ENCODE measurements at regions of chr11 and their contacts with region 1.

Region 1: DNA sequence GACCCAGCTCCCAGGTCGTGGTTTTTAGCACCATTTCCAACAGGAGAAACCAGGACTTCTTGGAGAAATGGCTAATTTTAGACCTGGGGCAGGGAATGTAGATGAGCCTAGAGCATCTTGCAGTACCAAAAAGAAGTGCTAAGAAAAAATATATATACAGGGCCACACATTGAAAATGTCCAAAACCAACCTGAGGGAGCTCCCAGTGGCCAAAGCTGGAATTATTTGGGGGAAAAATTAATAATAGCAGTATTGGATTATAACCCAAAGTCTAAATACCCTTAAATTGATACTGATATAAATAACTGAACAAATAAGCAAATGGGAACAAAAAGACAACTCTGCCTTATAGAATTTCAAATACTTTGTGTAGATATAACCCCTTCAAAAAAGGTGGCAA is 108.0 kb downstream of the PARVA start:
- DNase-seq: no peak
- H3K4me3 ChIP-seq: no peak overlapping the region
- H3K27ac ChIP-seq: no peak overlapping the region
- H3K4me1 ChIP-seq: no peaks in the 10 kb centered on the region
- H3K27me3 ChIP-seq: no peaks in the 10 kb centered on the region
- CTCF ChIP-seq: peak in 2 of 3 experiments; percentile 28 to 30; a peak in 2 of 4 replicates
- EP300 ChIP-seq: no peak
- POLR2A ChIP-seq: no peak
- RAD21 ChIP-seq: peak; percentile 43 to 55

Region 2: GRCh38 chr11:12411806-12412727 is 73.3 kb before region 1 on chr11:
- CTCF ChIA-PET with region 1: interaction called, 33 read pairs
- POLR2A ChIA-PET with region 1: no interaction called
- DNase-seq: peak; percentile 68 to 93
- H3K4me3 ChIP-seq: no peak overlapping the region
- H3K27ac ChIP-seq: no peak overlapping the region
- H3K4me1 ChIP-seq: peaks cover 0 to 7% (median 4%) of the 10 kb centered on the region in 4 experiments; a peak in 4 of 7 replicates
- H3K27me3 ChIP-seq: no peaks in the 10 kb centered on the region
- CTCF ChIP-seq: peak; percentile 83 to 85 (median 85)
- EP300 ChIP-seq: no peak
- POLR2A ChIP-seq: no peak
- RAD21 ChIP-seq: peak; percentile 89 to 90

Region 3: GRCh38 chr11:12456651-12457579 is 28.4 kb before region 1 on chr11:
- CTCF ChIA-PET with region 1: interaction called, 11 read pairs
- POLR2A ChIA-PET with region 1: no interaction called
- DNase-seq: no peak
- H3K4me3 ChIP-seq: no peak overlapping the region
- H3K27ac ChIP-seq: no peak overlapping the region
- H3K4me1 ChIP-seq: no peaks in the 10 kb centered on the region
- H3K27me3 ChIP-seq: peaks cover 0 to 3% (median 0%) of the 10 kb centered on the region in 4 experiments; a peak in 1 of 7 replicates
- CTCF ChIP-seq: no peak
- EP300 ChIP-seq: no peak
- POLR2A ChIP-seq: no peak
- RAD21 ChIP-seq: no peak

Region 4: DNA sequence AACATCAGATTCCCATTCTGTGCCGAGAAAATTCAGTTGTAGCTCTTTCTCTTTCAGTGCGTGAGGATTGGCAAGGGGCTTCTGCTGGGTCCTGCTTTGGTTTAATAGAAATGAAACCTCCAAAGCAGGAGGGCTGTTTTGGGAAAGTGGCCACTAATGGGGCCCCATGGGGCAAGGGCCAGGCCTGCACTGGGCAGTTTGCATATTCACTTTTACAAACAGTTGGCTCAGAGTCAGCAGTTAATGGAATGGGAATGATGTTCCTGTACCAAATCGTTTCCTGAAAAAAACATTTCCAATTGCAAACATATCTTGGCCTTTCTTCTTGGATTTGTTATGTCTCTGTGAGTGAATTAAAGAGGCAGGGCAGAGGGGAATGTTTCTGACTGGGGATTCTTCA is 15.9 kb before region 1 on chr11:
- CTCF ChIA-PET with region 1: interaction called, 40 read pairs
- POLR2A ChIA-PET with region 1: interaction called, 3 read pairs
- DNase-seq: no peak
- H3K4me3 ChIP-seq: no peak overlapping the region
- H3K27ac ChIP-seq: no peak overlapping the region
- H3K4me1 ChIP-seq: peaks cover 2 to 7% (median 5%) of the 10 kb centered on the region in 4 experiments; a peak in 3 of 7 replicates
- H3K27me3 ChIP-seq: no peaks in the 10 kb centered on the region
- CTCF ChIP-seq: no peak
- EP300 ChIP-seq: no peak
- POLR2A ChIP-seq: no peak
- RAD21 ChIP-seq: no peak

Region 5: GRCh38 chr11:12496171-12497025 is 11.1 kb after region 1 on chr11:
- CTCF ChIA-PET with region 1: interaction called, 60 read pairs
- POLR2A ChIA-PET with region 1: no interaction called
- DNase-seq: peak in 1 of 2 experiments; percentile 33
- H3K4me3 ChIP-seq: no peak overlapping the region
- H3K27ac ChIP-seq: no peak overlapping the region
- H3K4me1 ChIP-seq: peaks cover 0 to 9% (median 0%) of the 10 kb centered on the region in 4 experiments; a peak in 1 of 7 replicates
- H3K27me3 ChIP-seq: peaks cover 0 to 6% (median 0%) of the 10 kb centered on the region in 4 experiments; a peak in 1 of 7 replicates
- CTCF ChIP-seq: peak in 2 of 3 experiments; percentile 28 to 35; a peak in 3 of 4 replicates
- EP300 ChIP-seq: no peak
- POLR2A ChIP-seq: no peak
- RAD21 ChIP-seq: peak; percentile 1 to 33; a peak in 1 of 4 replicates

Region 6: DNA sequence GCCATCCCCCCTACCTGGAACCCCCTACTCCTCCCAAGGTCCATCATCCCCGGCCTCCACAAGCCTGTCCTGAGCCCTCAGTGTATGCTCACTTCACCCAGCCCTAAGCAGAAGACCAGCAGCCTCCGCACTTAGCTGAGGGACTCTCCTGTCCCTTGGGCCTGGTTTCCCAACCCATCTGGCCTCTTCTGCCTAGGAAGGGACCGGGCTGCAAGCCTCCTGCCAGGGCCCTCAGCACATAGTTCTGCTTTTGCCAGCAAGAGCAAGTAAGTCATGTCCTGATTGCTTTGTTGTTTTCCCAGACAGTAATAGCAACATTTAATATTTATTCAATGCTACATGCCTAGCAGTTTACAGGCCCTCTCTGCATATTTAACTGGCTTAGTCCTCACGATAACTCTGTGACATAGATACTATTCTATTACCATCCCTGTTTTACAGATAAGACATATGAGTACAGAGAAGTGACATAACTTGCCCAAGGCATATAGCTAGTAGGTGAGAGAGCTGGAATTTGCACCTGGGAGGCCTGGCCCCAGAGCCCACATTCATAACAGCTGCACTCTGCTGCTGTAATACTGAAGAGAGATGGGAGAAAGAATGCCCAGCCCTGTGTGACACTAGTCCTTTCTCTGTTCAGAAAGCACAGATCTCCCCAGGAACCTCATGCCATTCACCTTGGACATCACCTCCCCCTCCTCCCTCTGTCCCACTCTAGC is 31.2 kb after region 1 on chr11:
- CTCF ChIA-PET with region 1: interaction called, 10 read pairs
- POLR2A ChIA-PET with region 1: no interaction called
- DNase-seq: no peak
- H3K4me3 ChIP-seq: no peak overlapping the region
- H3K27ac ChIP-seq: no peak overlapping the region
- H3K4me1 ChIP-seq: no peaks in the 10 kb centered on the region
- H3K27me3 ChIP-seq: no peaks in the 10 kb centered on the region
- CTCF ChIP-seq: no peak
- EP300 ChIP-seq: no peak
- POLR2A ChIP-seq: no peak
- RAD21 ChIP-seq: no peak

Region 7: GRCh38 chr11:12606597-12606996 is 121.3 kb after region 1 on chr11:
- CTCF ChIA-PET with region 1: no interaction called
- POLR2A ChIA-PET with region 1: no interaction called
- DNase-seq: no peak
- H3K4me3 ChIP-seq: no peak overlapping the region
- H3K27ac ChIP-seq: no peak overlapping the region
- H3K4me1 ChIP-seq: no peaks in the 10 kb centered on the region
- H3K27me3 ChIP-seq: no peaks in the 10 kb centered on the region
- CTCF ChIP-seq: no peak
- EP300 ChIP-seq: no peak
- POLR2A ChIP-seq: no peak
- RAD21 ChIP-seq: no peak